ENCODE measurements at regions of chrX and their contacts with region 1.

Region 1: GRCh38 chrX:136635235-136635634 is 12.7 kb upstream of the CD40LG start:
- DNase-seq: no peak
- H3K4me3 Mint-ChIP-seq: peak overlapping the region; percentile 60
- H3K27ac Mint-ChIP-seq: peak overlapping the region; percentile 88
- H3K4me1 Mint-ChIP-seq: peaks cover 85% of the 10 kb centered on the region
- H3K27me3 Mint-ChIP-seq: no peaks in the 10 kb centered on the region

Region 2: GRCh38 chrX:136376713-136377112 is 258.5 kb before region 1 on chrX:
- CTCF ChIA-PET with region 1: no interaction called
- POLR2A ChIA-PET with region 1: no interaction called
- DNase-seq: no peak
- H3K4me3 Mint-ChIP-seq: no peak overlapping the region
- H3K27ac Mint-ChIP-seq: no peak overlapping the region
- H3K4me1 Mint-ChIP-seq: peaks cover 9% of the 10 kb centered on the region
- H3K27me3 Mint-ChIP-seq: peaks cover 7% of the 10 kb centered on the region

Region 3: DNA sequence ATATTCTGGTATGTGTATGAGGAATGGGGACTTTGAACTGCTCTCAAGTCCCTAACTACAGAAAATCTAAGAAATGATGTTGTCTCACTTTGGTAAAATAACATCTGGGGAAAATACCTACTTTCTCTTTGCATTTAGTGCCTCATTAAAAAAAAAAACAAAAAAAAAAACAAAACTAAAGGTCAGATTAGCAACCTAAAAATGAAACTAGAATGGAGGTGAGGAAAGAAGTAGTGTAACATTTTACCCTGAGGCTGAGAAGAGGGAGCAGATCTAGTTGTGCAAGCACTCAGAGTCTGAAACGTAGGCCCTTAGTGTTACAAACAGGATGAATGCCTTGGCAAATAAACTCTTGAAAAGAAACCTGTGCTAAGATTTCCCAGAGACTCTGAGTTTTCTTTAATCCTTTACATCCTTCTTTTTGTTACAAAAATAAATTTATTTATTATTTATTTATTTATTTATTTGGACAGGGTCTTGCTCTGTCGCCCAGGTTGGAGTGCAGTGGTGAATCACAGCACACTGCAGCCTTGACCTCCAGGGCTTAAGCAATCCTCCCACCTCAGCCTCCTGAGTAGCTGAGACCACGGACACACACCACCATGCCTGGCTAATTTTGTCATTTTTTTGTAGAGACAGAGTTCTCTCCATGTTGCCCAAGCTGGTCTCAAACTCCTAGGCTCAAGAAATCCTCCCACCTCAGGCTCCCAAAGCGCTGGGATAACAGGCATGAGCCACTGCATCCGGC is 47.0 kb before region 1 on chrX:
- CTCF ChIA-PET with region 1: no interaction called
- POLR2A ChIA-PET with region 1: interaction called, 14 read pairs
- DNase-seq: no peak
- H3K4me3 Mint-ChIP-seq: peak overlapping the region; percentile 57
- H3K27ac Mint-ChIP-seq: peak overlapping the region; percentile 97
- H3K4me1 Mint-ChIP-seq: peaks cover 66% of the 10 kb centered on the region
- H3K27me3 Mint-ChIP-seq: no peaks in the 10 kb centered on the region

Region 4: GRCh38 chrX:136608295-136609171 is 26.7 kb before region 1 on chrX:
- CTCF ChIA-PET with region 1: interaction called, 7 read pairs
- POLR2A ChIA-PET with region 1: interaction called, 12 read pairs
- DNase-seq: peak; percentile 72
- H3K4me3 Mint-ChIP-seq: peak overlapping the region; percentile 41
- H3K27ac Mint-ChIP-seq: peak overlapping the region; percentile 67
- H3K4me1 Mint-ChIP-seq: peaks cover 57% of the 10 kb centered on the region
- H3K27me3 Mint-ChIP-seq: no peaks in the 10 kb centered on the region

Region 5: GRCh38 chrX:136616987-136617685 is 18.1 kb before region 1 on chrX:
- CTCF ChIA-PET with region 1: interaction called, 5 read pairs
- POLR2A ChIA-PET with region 1: interaction called, 61 read pairs
- DNase-seq: peak; percentile 35
- H3K4me3 Mint-ChIP-seq: peak overlapping the region; percentile 32
- H3K27ac Mint-ChIP-seq: peak overlapping the region; percentile 87
- H3K4me1 Mint-ChIP-seq: peaks cover 66% of the 10 kb centered on the region
- H3K27me3 Mint-ChIP-seq: no peaks in the 10 kb centered on the region

Region 6: DNA sequence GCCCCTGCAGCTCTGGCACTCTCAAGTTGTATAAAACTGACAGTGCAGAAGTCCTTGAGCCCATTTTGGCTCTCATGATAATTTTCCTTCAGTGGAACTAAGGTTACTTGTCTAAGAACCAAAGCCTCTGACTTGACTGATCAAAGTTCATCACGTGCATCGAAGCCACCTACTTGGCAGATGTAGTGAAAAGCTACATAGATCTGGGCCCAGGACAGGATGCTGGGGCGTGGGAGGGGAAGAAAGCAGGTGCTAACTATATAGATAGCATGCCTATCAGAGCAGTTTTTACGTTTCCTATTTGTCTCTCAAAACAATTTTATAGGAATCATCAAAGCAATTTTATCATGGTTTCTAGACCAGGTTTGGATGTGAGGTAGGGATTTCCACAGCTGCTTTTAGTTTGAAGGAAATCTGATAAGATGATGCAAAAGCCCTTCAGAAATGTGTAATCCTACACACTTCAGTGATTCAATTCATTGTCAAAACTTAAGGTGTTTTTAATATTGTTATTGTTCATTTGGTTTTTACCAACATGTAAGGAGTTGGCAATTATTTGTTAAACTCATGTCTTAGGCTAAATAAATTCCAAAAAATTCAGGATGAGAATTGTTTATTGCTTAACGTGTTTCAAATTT is 11.5 kb after region 1 on chrX:
- CTCF ChIA-PET with region 1: interaction called, 10 read pairs
- POLR2A ChIA-PET with region 1: interaction called, 50 read pairs
- DNase-seq: peak; percentile 61
- H3K4me3 Mint-ChIP-seq: peak overlapping the region; percentile 96
- H3K27ac Mint-ChIP-seq: peak overlapping the region; percentile 91
- H3K4me1 Mint-ChIP-seq: peaks cover 57% of the 10 kb centered on the region
- H3K27me3 Mint-ChIP-seq: no peaks in the 10 kb centered on the region

Region 7: DNA sequence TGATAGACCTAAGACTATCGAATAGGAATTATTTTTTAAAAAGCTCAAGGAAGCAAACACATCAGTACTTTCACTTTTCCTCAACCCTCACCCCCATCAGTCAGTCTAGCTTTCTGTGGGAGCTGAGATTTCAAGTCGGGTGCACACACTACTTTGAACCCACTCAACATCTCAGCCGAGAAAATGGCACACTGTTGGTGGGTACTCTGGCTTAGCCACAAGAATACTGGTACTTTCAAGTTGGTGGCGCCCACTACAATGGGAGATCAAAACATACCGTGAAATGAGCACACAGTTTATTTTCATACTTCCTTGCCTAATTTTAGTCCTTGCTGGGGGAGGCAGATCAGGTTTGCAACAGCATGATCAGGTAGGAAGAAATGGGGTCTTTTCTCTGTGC is 22.9 kb after region 1 on chrX:
- CTCF ChIA-PET with region 1: interaction called, 8 read pairs
- POLR2A ChIA-PET with region 1: interaction called, 50 read pairs
- DNase-seq: no peak
- H3K4me3 Mint-ChIP-seq: peak overlapping the region; percentile 96
- H3K27ac Mint-ChIP-seq: peak overlapping the region; percentile 91
- H3K4me1 Mint-ChIP-seq: peaks cover 96% of the 10 kb centered on the region
- H3K27me3 Mint-ChIP-seq: no peaks in the 10 kb centered on the region

Region 8: DNA sequence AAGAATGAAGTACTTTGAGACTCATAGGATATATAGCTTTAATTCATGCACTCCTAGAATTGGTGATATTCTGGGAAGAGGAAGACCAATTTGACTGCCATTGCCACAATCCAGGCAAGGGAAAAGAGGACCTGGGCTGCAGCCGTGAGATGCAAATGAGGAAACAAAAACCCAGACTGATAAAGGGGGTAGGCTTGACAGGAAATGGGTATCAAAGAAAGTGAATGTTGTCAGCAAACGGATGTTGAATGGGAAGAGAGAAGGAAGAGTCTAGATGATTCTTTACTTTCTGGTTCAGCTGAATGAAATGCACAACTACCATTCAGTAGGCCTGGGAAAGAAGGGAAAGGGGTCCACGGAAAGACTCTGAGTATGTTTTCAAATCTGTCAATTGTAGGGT is 162.6 kb after region 1 on chrX:
- CTCF ChIA-PET with region 1: no interaction called
- POLR2A ChIA-PET with region 1: no interaction called
- DNase-seq: no peak
- H3K4me3 Mint-ChIP-seq: no peak overlapping the region
- H3K27ac Mint-ChIP-seq: peak overlapping the region; percentile 18
- H3K4me1 Mint-ChIP-seq: peaks cover 10% of the 10 kb centered on the region
- H3K27me3 Mint-ChIP-seq: no peaks in the 10 kb centered on the region